ENCODE measurements at regions of chr15 and their contacts with region 1.

Region 1: DNA sequence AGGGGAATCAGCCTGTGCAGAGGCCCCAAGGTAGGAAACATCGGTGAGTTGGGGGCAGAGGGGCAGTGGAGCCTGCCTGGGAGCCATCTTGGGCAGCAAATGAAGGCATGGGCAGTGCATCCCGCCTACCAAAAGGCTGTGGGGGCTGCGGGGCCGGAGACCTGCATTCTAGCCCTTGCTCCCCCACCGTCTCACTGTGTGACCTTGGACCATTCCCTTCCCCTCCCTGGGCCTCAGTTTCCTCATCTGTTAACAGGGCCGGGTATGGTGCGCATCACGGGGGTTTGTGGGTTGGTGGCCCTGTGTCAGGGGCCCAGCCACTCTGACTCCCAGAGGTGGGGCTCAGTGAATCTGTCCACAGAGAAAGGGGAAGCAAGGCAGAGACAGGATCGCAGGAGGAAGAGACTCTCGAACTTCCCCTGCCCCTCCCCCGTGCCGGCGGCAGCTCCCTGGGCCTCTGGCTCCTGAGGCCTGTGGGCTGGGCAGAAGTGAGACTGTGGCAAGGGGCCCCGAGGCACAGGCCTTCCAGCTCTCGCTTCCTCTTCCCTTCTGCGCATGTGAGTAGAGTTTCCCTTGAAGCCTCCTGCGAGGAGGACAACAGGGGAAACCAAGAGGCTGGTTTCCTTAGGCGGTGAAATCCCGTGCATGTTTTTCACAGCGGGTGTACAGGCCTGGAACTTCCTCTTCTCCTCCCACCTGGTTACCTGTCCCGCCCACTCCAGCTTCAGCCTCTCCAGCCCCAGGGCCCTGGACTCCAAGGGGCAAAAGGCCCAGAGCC is 42.9 kb downstream of the IDH2 start:
- DNase-seq: peak; percentile 92
- H3K4me3 Mint-ChIP-seq: peak overlapping the region; percentile 52
- H3K27ac Mint-ChIP-seq: peak overlapping the region; percentile 97
- H3K4me1 Mint-ChIP-seq: peaks cover 58% of the 10 kb centered on the region
- H3K27me3 Mint-ChIP-seq: no peaks in the 10 kb centered on the region

Region 2: DNA sequence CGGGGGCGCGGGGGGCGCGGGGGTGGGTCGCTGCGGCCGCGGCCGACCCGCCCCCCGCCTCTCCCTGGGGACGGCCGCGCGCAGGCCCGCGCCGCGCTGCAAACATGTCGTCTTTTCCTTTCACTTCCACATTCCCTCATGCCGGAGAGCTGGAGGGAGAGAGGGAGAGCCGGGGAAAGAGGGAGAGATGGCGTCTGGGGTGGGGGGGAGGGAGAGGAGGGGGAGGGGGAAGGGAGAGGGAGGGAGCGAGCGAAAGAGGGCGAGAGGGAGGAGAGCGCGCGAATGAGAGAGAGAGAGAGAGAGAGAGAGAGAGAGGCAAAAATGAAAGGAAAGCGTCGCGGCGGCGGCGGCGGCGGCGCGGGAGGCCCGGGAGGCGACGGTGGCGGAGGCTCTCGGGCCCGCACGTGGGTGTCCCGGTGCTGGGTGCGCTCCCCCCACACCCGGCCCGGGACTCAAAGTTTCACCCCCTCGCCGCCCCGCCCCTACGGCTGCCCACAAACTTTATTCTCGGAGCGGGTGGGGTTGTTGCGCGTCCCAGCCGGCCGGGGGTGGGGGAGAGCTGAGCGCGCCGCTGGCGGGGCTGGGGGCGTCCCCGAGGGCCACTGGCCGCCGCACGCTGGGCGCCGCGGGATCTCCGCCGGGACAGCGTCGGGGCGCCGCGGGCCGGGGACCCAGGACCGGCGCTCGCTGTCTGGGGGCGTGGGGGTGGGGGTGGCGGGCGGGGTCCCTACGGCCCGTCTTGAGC is 57.5 kb before region 1 on chr15:
- CTCF ChIA-PET with region 1: interaction called, 4 read pairs
- POLR2A ChIA-PET with region 1: interaction called, 11 read pairs
- intact Hi-C with region 1: loop called (anchors 2 kb)
- DNase-seq: peak; percentile 78
- H3K4me3 Mint-ChIP-seq: peak overlapping the region; percentile 86
- H3K27ac Mint-ChIP-seq: peak overlapping the region; percentile 86
- H3K4me1 Mint-ChIP-seq: peaks cover 52% of the 10 kb centered on the region
- H3K27me3 Mint-ChIP-seq: no peaks in the 10 kb centered on the region

Region 3: DNA sequence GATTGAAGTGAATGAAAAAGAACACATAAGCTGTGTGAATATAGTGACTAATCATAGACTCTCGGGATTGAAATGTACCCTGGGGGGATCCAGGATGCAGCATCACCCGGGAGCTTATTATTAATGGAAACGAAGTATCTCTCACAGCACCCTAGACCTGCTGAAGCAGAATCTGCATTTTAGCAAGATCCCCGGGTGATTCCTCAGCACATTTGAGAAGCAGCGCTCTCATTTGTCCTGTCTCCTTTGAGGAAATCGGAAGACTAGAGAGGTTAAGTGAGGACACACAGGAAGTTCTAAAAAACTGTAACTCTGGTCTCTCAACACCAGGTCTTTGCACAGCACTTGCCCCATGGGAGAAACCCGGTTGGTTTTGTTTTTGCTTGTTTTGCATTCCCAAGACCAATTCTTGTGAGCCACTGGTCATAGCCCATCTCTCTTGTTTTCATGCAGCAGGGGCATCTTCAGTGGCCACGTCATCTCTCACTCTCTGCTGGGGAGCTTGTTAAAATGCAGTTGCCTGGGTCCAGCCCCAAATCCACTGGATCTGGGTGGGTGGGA is 28.1 kb before region 1 on chr15:
- CTCF ChIA-PET with region 1: no interaction called
- POLR2A ChIA-PET with region 1: interaction called, 4 read pairs
- intact Hi-C with region 1: loop called (anchors 1 kb)
- DNase-seq: peak; percentile 64
- H3K4me3 Mint-ChIP-seq: peak overlapping the region; percentile 5
- H3K27ac Mint-ChIP-seq: peak overlapping the region; percentile 80
- H3K4me1 Mint-ChIP-seq: peaks cover 56% of the 10 kb centered on the region
- H3K27me3 Mint-ChIP-seq: no peaks in the 10 kb centered on the region